ENCODE measurements at regions of chr18 and their contacts with region 1.

Region 1: DNA sequence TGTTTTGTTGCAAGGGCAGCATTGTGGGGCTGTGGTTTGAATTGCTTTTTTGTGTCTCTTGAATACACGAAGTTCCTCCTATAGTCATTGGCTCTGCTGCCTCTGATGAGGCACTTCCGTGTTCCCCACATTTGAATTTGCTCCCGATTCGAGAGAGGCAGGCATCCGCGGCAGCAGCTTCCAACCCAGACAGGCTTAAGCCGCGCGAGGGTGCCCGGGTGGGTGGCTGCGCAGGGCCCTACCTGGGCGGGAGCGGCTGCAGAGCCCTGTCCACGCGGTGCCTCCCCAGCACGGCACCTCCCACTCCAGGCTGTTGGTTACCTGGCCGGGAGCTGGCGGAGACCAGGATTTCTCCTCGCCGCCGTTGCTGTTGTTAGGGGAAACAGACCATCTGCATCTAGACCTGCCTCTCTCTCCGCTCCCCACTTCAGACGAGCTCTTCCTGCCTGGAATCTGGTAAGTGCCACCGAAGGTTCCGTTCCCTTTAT is 151.3 kb downstream of the NEDD4L start:
- DNase-seq: no peak
- ATAC-seq: peak; percentile 79
- H3K4me3 Mint-ChIP-seq: peak overlapping the region; percentile 59
- H3K27ac Mint-ChIP-seq: no peak overlapping the region
- H3K4me1 Mint-ChIP-seq: peaks cover 3% of the 10 kb centered on the region
- H3K27me3 Mint-ChIP-seq: peaks cover 27% of the 10 kb centered on the region

Region 2: GRCh38 chr18:58180738-58181353 is 14.5 kb before region 1 on chr18:
- CTCF ChIA-PET with region 1: interaction called, 13 read pairs
- POLR2A ChIA-PET with region 1: no interaction called
- DNase-seq: peak; percentile 73
- ATAC-seq: no peak
- H3K4me3 Mint-ChIP-seq: no peak overlapping the region
- H3K27ac Mint-ChIP-seq: no peak overlapping the region
- H3K4me1 Mint-ChIP-seq: no peaks in the 10 kb centered on the region
- H3K27me3 Mint-ChIP-seq: peaks cover 3% of the 10 kb centered on the region

Measured in activated CD8-positive, alpha-beta T cell treated with anti-CD3 and anti-CD28 coated beads, Interleukin-2, amount 10 ng/mL, durations not matched to agents 7 days and 5 days (primary cell).